Activated T-helper 1 cell treated with anti-CD3 and anti-CD28 coated beads, Interleukin-12 subunit alpha, Interleukin-12 subunit beta, Interleukin-2, Interleukin-4 antibody, amounts not matched to agents 30 ng/mL and 10 ng/mL and 1 ng/mL, durations not matched to agents 14 hours and 24 hours and 36 hours (primary cell): ENCODE measurements at regions of chr12 and their contacts with region 1.

Region 1: GRCh38 chr12:14399871-14400270 is 34.4 kb downstream of the ATF7IP start:
- DNase-seq: no peak
- H3K4me3 Mint-ChIP-seq: peak overlapping the region; percentile 66
- H3K27ac Mint-ChIP-seq: peak overlapping the region; percentile 77
- H3K4me1 Mint-ChIP-seq: peaks cover 88% of the 10 kb centered on the region
- H3K27me3 Mint-ChIP-seq: no peaks in the 10 kb centered on the region

Region 2: GRCh38 chr12:14384783-14385638 is 14.9 kb before region 1 on chr12:
- intact Hi-C with region 1: loop called (anchors 2 kb)
- DNase-seq: peak; percentile 73
- H3K4me3 Mint-ChIP-seq: peak overlapping the region; percentile 86
- H3K27ac Mint-ChIP-seq: peak overlapping the region; percentile 97
- H3K4me1 Mint-ChIP-seq: peaks cover 58% of the 10 kb centered on the region
- H3K27me3 Mint-ChIP-seq: no peaks in the 10 kb centered on the region

Region 3: DNA sequence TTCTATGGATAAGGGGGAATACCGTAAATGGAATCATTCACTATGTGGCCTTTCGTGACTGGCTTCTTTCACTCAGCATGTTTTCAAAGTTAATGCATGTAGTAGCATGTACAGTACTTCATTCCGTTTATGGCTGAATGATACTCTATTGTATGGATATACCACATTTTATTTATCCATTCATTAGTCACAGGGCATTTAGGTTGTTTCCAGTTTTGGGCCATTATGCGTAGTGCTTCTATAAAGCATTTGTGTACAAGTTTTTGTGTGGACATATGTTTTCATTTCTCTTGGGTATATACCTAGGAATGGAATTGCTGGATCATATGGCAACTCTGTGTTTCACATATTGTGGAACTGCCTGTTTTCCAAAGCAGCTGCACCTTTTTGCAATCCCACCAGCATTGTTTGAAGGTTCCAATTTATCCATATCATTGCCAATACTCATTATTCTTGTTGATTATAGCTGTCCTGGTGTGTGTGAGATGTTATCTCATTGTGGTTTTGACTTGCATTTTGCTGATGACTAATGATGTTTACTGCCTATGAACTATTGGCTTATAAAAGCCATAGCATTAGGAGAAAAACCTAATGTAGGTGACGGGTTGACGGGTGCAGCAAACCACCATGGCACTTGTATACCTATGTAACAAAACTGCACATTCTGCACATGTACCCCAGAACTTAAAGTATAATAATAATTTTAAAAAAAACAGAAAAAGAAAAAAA is 11.1 kb after region 1 on chr12:
- intact Hi-C with region 1: loop called (anchors 1 kb)
- DNase-seq: no peak
- H3K4me3 Mint-ChIP-seq: peak overlapping the region; percentile 8
- H3K27ac Mint-ChIP-seq: peak overlapping the region; percentile 6
- H3K4me1 Mint-ChIP-seq: peaks cover 59% of the 10 kb centered on the region
- H3K27me3 Mint-ChIP-seq: no peaks in the 10 kb centered on the region